ENCODE measurements at regions of chr14 and their contacts with region 1.

Region 1: GRCh38 chr14:88468396-88468795 is 82.9 kb downstream of the SPATA7 start:
- DNase-seq: peak; percentile 92
- ATAC-seq: peak; percentile 86
- H3K4me3 ChIP-seq: no peak overlapping the region
- H3K27ac ChIP-seq: peak overlapping the region; percentile 97
- H3K4me1 ChIP-seq: peaks cover 26% of the 10 kb centered on the region
- H3K27me3 ChIP-seq: no peaks in the 10 kb centered on the region
- CTCF ChIP-seq: no peak
- POLR2A ChIP-seq: no peak
- RAD21 ChIP-seq: no peak

Region 2: DNA sequence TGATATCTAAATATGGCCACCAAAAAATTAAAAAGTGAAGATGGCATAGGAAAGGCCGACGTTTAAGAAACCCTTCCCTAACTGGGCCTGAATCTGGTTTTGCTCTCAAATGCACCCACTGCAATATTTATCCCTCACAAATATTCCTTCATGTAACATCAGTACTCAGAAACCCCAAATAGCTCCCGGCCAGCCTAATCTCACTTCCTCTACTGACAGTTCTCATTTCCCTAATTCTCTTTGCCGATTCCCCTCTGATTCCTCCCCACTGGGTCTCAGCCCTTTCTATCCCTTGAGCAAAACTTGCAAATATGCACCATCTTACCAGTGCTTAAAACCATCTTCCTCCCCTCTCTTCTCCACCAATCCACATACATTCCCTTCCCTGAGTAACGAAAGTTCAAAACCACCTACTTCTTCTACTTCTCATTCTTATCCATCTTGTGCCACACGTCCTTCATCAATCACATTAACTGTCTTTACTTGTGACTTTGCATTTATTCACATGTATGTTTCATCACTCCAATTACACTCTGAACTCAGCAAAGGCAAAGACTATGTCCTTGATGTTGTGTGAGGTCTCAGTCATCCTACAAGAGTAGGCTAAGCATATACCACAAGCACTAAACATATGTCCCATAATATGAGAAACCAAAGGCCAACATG is 168.4 kb before region 1 on chr14:
- CTCF ChIA-PET with region 1: no interaction called
- POLR2A ChIA-PET with region 1: no interaction called
- dilution Hi-C with region 1: no loop called
- in situ Hi-C with region 1: no loop called
- intact Hi-C with region 1: no loop called
- DNase-seq: no peak
- ATAC-seq: no peak
- H3K4me3 ChIP-seq: no peak overlapping the region
- H3K27ac ChIP-seq: no peak overlapping the region
- H3K4me1 ChIP-seq: no peaks in the 10 kb centered on the region
- H3K27me3 ChIP-seq: no peaks in the 10 kb centered on the region
- CTCF ChIP-seq: no peak
- POLR2A ChIP-seq: no peak
- RAD21 ChIP-seq: no peak

Region 3: DNA sequence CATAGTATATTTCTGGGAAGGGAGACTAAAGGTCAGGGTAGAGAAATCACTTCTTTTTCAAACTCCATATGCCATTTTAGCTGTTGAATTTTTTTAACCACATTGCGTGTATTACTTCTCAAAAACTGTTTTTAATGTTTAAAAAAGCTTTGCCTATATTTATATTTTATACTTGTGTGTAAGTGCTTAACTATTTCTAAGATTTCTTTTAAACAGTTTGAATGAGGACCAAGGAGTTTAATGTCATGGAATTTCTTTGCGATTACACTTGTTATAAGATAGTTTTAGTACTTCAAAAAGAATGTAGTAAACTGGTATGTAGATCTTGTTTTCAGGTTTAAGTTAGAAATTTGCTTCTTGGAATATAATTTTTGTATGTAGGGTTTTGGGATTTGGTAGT is 75.8 kb before region 1 on chr14:
- CTCF ChIA-PET with region 1: interaction called, 3 read pairs
- POLR2A ChIA-PET with region 1: no interaction called
- dilution Hi-C with region 1: no loop called
- in situ Hi-C with region 1: no loop called
- intact Hi-C with region 1: loop called (anchors 2 kb)
- DNase-seq: peak; percentile 75
- ATAC-seq: peak; percentile 89
- H3K4me3 ChIP-seq: no peak overlapping the region
- H3K27ac ChIP-seq: no peak overlapping the region
- H3K4me1 ChIP-seq: peaks cover 5% of the 10 kb centered on the region
- H3K27me3 ChIP-seq: no peaks in the 10 kb centered on the region
- CTCF ChIP-seq: no peak
- POLR2A ChIP-seq: no peak
- RAD21 ChIP-seq: no peak